Mammary epithelial cell (primary cell): ENCODE measurements at regions of chr14 and their contacts with region 1.

Region 1: DNA sequence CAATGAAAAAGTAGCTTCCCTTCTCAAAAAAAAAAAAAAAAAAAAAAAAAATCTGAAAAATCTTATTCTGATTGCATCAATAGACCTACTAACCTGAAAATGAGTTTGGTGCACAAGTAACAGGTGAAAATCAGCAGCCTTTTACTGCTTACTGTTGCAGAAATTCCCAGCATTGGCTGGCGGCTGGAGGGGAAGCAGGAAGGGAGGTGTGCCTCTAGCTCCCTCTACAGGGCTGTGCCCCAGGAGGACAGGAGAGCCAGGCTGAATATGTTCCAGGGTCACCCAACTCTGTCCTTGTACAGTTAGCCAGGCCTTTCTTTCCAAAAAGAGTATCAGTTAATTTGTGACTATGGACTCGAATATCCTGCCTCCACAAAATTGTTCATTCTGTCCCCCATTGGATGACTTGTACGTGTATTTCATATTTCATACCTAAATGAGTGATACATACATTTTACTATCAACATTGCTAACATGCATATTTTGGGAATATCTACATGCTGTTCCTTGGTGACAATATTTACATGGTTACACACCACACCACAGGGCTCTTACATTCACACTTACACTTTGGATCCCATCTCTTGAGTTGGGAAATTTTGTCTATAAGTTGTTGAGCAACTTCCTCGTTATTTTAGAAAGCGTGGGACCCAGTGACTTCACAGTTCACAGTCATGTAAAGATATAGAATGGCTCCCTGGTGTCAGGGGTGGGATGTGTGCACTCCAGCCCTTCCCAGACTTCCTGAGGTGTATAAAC is 124.8 kb downstream of the SAMD4A start:
- DNase-seq: peak; percentile 64
- H3K4me3 ChIP-seq: no peak overlapping the region
- H3K27ac ChIP-seq: no peak overlapping the region
- H3K4me1 ChIP-seq: peaks cover 8% of the 10 kb centered on the region
- H3K27me3 ChIP-seq: no peaks in the 10 kb centered on the region
- CTCF ChIP-seq: peak; percentile 93 to 97

Region 2: DNA sequence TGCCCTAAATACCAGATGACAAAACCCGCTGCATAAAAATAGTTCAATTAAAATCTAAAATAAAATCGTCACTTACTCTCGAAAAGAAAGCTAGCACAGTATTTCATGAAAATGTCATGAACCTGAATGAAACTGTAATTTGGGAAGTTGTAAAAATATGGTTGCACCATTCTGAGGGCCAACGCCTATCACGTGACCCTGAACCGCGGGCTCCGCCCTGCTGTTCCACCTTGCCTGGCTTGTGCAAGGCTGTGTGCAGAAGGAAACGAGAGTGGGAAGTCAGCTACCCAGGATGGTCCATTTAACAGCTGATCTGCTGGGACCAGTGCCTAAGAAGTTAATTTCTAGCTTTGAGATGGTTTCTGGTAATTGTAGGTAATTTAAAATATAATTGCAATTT is 643.4 kb before region 1 on chr14:
- CTCF ChIA-PET with region 1: no interaction called
- dilution Hi-C with region 1: no loop called
- in situ Hi-C with region 1: no loop called
- intact Hi-C with region 1: no loop called
- DNase-seq: no peak
- H3K4me3 ChIP-seq: no peak overlapping the region
- H3K27ac ChIP-seq: no peak overlapping the region
- H3K4me1 ChIP-seq: no peaks in the 10 kb centered on the region
- H3K27me3 ChIP-seq: no peaks in the 10 kb centered on the region
- CTCF ChIP-seq: no peak

Region 3: DNA sequence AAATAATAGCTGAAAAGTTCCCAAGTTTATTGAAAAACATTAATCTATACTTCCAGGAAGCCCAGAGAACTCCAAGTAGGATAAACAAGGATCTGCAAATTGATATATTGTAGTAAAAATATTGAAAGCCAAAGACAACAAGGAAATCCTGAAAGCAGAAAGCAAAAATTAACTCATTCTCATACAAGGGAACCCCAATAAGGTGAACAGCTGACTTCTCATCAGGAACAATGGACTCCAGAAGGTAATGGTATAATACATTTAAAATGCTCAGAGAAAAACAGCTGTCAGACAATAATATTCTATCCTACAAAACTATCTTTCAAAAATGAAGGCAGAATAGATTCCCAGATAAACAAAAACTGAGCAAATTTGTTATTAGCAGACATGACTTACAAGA is 596.9 kb before region 1 on chr14:
- CTCF ChIA-PET with region 1: no interaction called
- dilution Hi-C with region 1: no loop called
- in situ Hi-C with region 1: no loop called
- intact Hi-C with region 1: no loop called
- DNase-seq: no peak
- H3K4me3 ChIP-seq: no peak overlapping the region
- H3K27ac ChIP-seq: no peak overlapping the region
- H3K4me1 ChIP-seq: peaks cover 5% of the 10 kb centered on the region
- H3K27me3 ChIP-seq: no peaks in the 10 kb centered on the region
- CTCF ChIP-seq: no peak

Region 4: DNA sequence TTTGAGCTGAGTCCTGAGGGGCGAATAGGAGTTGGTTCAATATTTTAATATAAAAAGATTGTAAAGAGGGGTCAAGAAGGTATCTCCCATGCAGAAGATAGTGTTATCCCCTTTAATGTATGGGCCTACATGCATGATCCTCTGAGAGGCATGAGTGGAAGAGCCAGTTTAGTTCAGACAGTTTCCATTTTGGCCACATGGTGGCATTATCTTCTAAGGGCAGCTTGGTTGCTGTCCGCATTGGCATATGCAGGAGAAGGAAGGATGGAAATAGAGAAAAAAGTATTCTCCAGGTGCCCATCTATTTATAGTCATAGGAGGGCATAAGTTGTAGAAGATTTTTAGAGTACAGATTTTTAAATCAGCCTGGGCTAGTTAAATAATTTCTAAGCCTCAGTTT is 119.4 kb before region 1 on chr14:
- CTCF ChIA-PET with region 1: no interaction called
- dilution Hi-C with region 1: loop called (anchors 5 kb)
- in situ Hi-C with region 1: loop called (anchors 5 to 10 kb)
- intact Hi-C with region 1: loop called (anchors 1 kb)
- DNase-seq: peak; percentile 43
- H3K4me3 ChIP-seq: no peak overlapping the region
- H3K27ac ChIP-seq: no peak overlapping the region
- H3K4me1 ChIP-seq: peaks cover 33% of the 10 kb centered on the region
- H3K27me3 ChIP-seq: no peaks in the 10 kb centered on the region
- CTCF ChIP-seq: peak; percentile 61 to 66

Region 5: DNA sequence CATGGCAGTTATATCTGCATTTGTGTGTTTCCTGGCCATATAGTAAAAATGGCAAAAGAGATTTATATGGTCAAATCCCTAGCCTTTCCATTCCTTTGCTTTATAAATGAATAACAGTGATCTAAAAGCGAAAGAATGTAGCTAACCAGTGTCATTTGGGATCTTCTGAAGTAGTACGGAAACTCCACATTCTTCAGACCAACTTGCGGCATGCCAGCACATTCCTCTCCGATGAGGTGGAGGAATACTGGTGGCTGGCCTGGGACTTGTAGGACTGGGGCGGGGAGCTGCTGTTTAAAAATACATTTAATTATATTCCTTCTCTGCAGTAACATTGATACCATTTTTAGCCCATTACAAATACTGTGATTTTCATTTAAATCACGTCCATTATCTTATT is 39.5 kb before region 1 on chr14:
- CTCF ChIA-PET with region 1: no interaction called
- dilution Hi-C with region 1: no loop called
- in situ Hi-C with region 1: no loop called
- intact Hi-C with region 1: loop called (anchors 2 kb)
- DNase-seq: peak; percentile 98
- H3K4me3 ChIP-seq: peak overlapping the region in 2 of 3 experiments; percentile 37 to 40
- H3K27ac ChIP-seq: peak overlapping the region; percentile 94
- H3K4me1 ChIP-seq: peaks cover 45% of the 10 kb centered on the region
- H3K27me3 ChIP-seq: no peaks in the 10 kb centered on the region
- CTCF ChIP-seq: no peak

Region 6: DNA sequence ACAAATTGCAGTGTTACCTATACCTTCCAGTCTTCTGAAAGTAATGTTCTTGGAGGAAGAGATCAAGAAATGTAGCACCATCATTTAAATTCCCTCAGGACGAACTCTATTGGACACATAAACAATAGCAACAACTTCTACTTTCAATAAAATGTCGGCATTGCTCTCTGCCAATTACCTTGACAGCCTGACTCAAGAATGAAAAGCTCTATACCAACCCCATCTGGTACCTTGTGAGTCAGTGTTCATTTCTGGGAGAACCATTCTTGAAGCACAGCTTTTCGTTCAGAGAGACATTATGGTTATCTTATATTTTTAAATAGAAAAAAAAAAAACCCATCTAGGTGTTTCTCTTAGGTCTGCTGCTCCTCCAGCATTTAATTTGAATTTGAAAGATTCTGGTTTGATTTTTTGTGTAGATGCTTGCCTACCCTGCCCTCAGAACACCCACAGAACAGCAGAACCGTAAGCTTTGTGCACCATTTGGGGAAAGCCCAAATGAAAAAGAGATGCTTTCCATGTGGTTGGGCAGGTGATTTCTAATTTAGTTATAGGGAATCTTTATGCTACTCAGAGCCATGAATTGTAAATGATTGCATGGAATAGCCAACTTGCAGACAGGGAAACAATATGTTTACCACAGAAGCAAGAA is 31.2 kb after region 1 on chr14:
- CTCF ChIA-PET with region 1: no interaction called
- dilution Hi-C with region 1: no loop called
- in situ Hi-C with region 1: no loop called
- intact Hi-C with region 1: loop called (anchors 2 kb)
- DNase-seq: peak; percentile 58
- H3K4me3 ChIP-seq: no peak overlapping the region
- H3K27ac ChIP-seq: no peak overlapping the region
- H3K4me1 ChIP-seq: no peaks in the 10 kb centered on the region
- H3K27me3 ChIP-seq: no peaks in the 10 kb centered on the region
- CTCF ChIP-seq: peak; percentile 52 to 73